ENCODE measurements at regions of chr5 and their contacts with region 1.

Region 1: DNA sequence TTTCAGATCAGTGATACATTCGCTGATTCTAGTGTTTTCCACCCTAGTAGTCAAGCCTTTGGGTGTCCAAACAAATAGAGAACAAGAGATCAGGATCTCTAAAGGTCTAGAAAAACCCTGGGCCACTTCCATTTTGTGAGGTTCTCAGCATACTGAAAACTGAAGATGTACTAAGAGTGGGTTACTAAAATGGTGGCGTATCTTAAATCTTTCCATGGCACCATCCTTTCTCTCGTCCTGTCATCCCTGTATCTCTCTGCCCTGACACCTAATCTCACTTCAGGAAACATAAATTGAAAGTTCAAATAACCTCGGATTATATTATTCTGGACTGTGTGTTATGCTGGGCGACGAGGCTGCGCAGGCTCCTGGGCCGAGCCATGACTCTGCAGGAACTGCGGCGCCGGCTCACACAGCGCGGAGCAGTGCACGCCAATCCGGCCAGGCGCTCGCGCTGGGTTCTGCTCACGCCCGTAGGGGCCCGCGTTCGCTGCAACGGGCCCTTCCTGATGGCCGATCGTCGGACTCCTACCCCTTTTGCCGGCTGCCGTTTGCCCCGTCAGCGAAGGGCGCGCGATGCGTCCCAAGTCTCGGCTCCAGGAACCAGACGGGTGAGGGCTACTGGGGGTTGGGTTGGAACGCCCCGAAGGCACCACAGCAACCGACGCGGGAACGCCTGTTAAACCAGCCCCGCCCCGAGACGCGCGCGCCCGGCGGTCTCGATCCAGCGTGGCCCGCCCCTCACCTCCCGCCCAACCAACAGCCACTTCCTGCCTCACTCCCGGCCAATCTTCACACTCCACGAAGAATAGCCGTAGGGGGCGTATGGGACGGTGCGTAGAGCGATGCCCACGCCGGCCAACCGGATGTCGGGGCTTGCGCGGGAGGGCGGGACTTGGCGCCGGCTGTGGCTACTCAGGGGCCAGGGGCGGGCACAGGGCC is 503 bp upstream of the CANX start:
- DNase-seq: peak; percentile 99
- ATAC-seq: peak; percentile 89
- H3K4me3 Mint-ChIP-seq: peak overlapping the region; percentile 94
- H3K27ac Mint-ChIP-seq: peak overlapping the region; percentile 100
- H3K4me1 Mint-ChIP-seq: peaks cover 34% of the 10 kb centered on the region
- H3K27me3 Mint-ChIP-seq: no peaks in the 10 kb centered on the region

Region 2: GRCh38 chr5:179550511-179551230 is 147.6 kb before region 1 on chr5 and contains the start of gene RUFY1:
- CTCF ChIA-PET with region 1: interaction called, 3 read pairs
- POLR2A ChIA-PET with region 1: no interaction called
- intact Hi-C with region 1: loop called (anchors 1 to 2 kb)
- DNase-seq: peak; percentile 89
- ATAC-seq: peak; percentile 80
- H3K4me3 Mint-ChIP-seq: peak within 1 kb of the TSS; percentile 96
- H3K27ac Mint-ChIP-seq: peak within 1 kb of the TSS; percentile 99
- H3K4me1 Mint-ChIP-seq: peaks cover 37% of the 10 kb centered on the region
- H3K27me3 Mint-ChIP-seq: no peaks in the 10 kb centered on the region
- total RNA-seq, gene RUFY1: 29.6 to 33.8 TPM

Region 3: DNA sequence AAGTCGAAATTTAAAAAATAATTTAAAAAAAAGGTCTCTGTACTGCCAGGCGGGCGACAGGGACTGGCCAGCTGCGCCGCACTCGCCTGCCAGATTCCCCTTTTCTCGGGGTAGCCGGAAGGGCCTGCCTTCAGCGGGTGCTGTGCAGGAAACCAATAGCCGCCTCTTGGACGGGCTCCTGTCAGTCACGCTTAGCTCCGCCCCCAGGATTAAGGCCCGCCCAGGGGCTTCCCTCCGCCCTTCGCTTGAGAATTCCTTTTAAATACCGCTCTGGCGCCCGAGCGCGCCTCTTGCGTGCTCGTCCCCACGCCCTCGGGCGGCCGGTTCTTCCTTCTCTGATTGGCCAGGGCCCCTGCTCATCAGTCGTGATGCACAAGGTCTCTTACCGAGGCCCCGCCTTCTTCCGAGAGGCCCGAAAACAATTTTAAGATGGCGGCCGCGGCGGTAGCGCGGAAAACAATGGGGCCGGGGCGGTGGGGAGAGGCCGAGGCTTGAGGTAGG is 34.2 kb after region 1 on chr5 and contains the start of gene MAML1:
- CTCF ChIA-PET with region 1: interaction called, 6 read pairs
- POLR2A ChIA-PET with region 1: interaction called, 9 read pairs
- intact Hi-C with region 1: loop called (anchors 1 kb)
- DNase-seq: peak; percentile 99
- ATAC-seq: peak; percentile 95
- H3K4me3 Mint-ChIP-seq: peak within 1 kb of the TSS; percentile 92
- H3K27ac Mint-ChIP-seq: peak within 1 kb of the TSS; percentile 94
- H3K4me1 Mint-ChIP-seq: peaks cover 43% of the 10 kb centered on the region
- H3K27me3 Mint-ChIP-seq: no peaks in the 10 kb centered on the region
- total RNA-seq, gene MAML1: 25.4 to 32.6 TPM

Region 4: GRCh38 chr5:179821581-179822432 is 123.5 kb after region 1 on chr5:
- CTCF ChIA-PET with region 1: no interaction called
- POLR2A ChIA-PET with region 1: interaction called, 4 read pairs
- intact Hi-C with region 1: loop called in 1 of 2 experiments (anchors 1 kb)
- DNase-seq: peak; percentile 92
- ATAC-seq: peak; percentile 71
- H3K4me3 Mint-ChIP-seq: peak overlapping the region; percentile 92
- H3K27ac Mint-ChIP-seq: peak overlapping the region; percentile 90
- H3K4me1 Mint-ChIP-seq: peaks cover 38% of the 10 kb centered on the region
- H3K27me3 Mint-ChIP-seq: peaks cover 2% of the 10 kb centered on the region

Region 5: DNA sequence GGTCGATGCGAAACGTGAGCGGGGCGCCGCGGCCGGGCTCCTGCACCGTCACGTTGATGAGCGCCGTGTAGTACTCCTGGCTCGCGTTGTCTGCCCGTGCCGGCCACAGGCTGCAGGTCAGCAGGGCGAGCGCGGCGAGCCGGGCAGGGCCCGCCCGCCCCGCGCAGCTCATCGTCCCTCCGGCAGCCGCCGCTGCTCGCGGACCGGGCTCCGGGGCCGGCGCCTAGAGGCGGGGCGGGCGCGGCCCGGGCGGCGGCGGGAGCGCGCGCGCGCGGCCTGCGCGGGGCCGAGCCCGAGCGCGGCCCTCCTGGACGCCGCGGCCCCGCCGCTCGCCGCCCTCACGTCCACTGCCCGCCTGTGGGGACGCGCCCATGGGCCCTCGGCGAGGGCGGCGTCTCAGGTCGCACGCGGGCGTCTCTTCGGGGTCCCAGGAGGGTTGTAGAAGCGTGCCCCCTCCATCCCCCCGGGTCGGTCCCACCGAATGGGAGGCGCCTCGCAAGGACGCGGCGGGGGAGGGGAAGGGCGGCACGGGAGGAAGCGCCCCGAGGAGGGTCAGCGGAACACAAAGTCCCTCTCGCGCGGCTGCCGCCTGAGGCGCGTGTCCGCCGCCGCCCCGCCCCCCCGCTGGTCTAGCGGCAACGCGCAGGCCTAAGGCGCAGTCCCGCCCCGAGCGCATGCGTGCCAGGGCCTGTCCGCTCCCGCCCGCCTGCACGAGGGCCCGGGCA is 373.4 kb after region 1 on chr5 and contains the start of gene RNF130:
- CTCF ChIA-PET with region 1: no interaction called
- POLR2A ChIA-PET with region 1: no interaction called
- intact Hi-C with region 1: loop called in 1 of 2 experiments (anchors 1 kb)
- DNase-seq: peak; percentile 93
- ATAC-seq: peak; percentile 79
- H3K4me3 Mint-ChIP-seq: peak within 1 kb of the TSS; percentile 80
- H3K27ac Mint-ChIP-seq: peak within 1 kb of the TSS; percentile 44
- H3K4me1 Mint-ChIP-seq: peaks cover 29% of the 10 kb centered on the region
- H3K27me3 Mint-ChIP-seq: no peaks in the 10 kb centered on the region
- total RNA-seq, gene RNF130: 10.3 to 13.3 TPM